Gastrocnemius medialis (tissue), 4 donors: ENCODE measurements at regions of chr17 and their contacts with region 1.

Region 1: DNA sequence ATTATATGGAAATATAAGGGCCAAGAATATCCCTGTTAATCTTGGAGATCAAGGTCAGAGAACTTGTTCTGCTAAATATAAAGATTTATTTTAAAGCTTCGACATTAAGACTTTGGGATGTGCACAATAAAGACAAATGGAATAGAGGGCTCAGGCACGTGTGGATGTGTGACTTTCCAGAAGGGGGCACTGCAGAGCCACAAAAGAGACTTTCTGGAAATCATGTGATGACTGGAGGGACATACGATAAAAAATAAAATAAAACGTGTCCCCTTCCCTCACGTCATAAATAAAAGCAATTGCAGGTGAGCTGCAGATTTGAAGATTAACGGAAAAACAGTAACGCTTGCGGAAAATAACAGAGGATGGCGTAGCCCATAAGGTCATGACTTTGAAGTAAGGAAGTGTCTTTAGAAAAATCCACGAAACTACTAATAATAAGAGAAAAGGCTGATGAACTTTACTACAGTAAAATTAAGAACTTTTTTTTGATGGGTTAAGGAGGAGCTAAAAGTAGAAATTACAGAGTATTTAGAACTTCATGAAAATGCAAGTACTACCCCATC is 9.4 kb upstream of the ENGASE start:
- DNase-seq: peak in 1 of 2 donors; percentile 38
- ATAC-seq: peak; percentile 78 to 85
- H3K4me3 ChIP-seq: no peak overlapping the region
- H3K27ac ChIP-seq: no peak overlapping the region
- H3K4me1 ChIP-seq: peaks cover 0 to 4% of the 10 kb centered on the region in 2 donors
- H3K27me3 ChIP-seq: no peaks in the 10 kb centered on the region
- CTCF ChIP-seq: peak in 4 of 5 experiments; percentile 62 to 72 (median 68)
- POLR2A ChIP-seq: no peak

Region 2: GRCh38 chr17:79082311-79083190 is 17.4 kb after region 1 on chr17:
- in situ Hi-C with region 1: no loop called
- intact Hi-C with region 1: loop called (anchors 1 kb)
- DNase-seq: no peak
- ATAC-seq: peak in 1 of 2 donors; percentile 58
- H3K4me3 ChIP-seq: no peak overlapping the region
- H3K27ac ChIP-seq: peak overlapping the region in 2 of 4 donors; percentile 30 to 31
- H3K4me1 ChIP-seq: peaks cover 11 to 14% of the 10 kb centered on the region in 2 donors
- H3K27me3 ChIP-seq: no peaks in the 10 kb centered on the region
- CTCF ChIP-seq: peak; percentile 54 to 80 (median 76)
- POLR2A ChIP-seq: no peak

Region 3: GRCh38 chr17:79087428-79088143 is 22.4 kb after region 1 on chr17:
- in situ Hi-C with region 1: no loop called
- intact Hi-C with region 1: loop called (anchors 1 kb)
- DNase-seq: peak in 1 of 2 donors; percentile 60
- ATAC-seq: peak; percentile 65 to 71
- H3K4me3 ChIP-seq: no peak overlapping the region
- H3K27ac ChIP-seq: no peak overlapping the region
- H3K4me1 ChIP-seq: peaks cover 10 to 13% of the 10 kb centered on the region in 2 donors
- H3K27me3 ChIP-seq: peaks cover 4 to 15% (median 7%) of the 10 kb centered on the region in 3 donors
- CTCF ChIP-seq: peak; percentile 81 to 94 (median 91)
- POLR2A ChIP-seq: no peak